ENCODE measurements at regions of chr7 and their contacts with region 1.

Region 1: GRCh38 chr7:101058355-101058754 is 26.9 kb upstream of the TRIM56 start:
- DNase-seq: peak; percentile 76
- ATAC-seq: peak; percentile 82

Region 2: GRCh38 chr7:100803398-100804233 is 254.7 kb before region 1 on chr7:
- intact Hi-C with region 1: loop called (anchors 10 kb)
- DNase-seq: peak; percentile 76
- ATAC-seq: peak; percentile 92

Region 3: GRCh38 chr7:100896732-100897608 is 161.4 kb before region 1 on chr7:
- intact Hi-C with region 1: loop called (anchors 1 kb)
- DNase-seq: peak; percentile 67
- ATAC-seq: peak; percentile 38

Region 4: DNA sequence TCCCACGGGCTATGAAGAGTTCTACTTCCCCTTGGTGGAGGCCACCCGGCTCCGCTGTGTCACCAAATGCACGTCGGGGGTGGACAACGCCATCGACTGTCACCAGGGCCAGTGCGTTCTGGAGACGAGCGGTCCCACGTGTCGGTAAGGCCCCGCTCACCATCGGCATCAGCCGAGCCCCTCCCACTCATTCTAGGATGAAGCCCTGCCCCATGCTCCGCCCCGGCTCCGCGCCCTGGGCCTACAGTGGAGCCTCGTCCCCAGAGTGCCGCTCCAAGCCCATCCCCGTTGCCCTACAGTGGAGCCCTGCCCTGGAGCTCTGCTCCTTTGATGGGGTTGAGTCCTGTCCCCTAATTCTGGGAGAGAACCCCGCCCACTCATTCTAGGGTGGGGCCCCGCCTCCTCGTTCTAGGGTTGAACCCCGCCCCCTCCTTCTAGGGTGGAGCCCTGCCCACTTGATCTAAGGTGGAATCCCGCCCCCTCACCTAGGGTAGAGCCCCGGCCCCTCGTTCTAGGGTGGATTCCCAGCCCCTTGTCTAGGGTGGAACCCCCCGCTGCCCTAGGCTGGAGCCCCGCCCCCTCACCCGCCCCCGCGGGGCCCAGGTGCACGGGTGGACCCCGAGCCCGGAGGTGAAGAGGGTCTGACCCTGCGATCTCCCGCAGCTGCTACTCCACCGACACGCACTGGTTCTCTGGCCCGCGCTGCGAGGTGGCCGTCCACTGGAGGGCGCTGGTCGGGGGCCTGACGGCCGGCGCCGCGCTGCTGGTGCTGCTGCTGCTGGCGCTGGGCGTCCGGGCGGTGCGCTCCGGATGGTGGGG is 92.4 kb before region 1 on chr7:
- intact Hi-C with region 1: loop called (anchors 5 kb)
- DNase-seq: peak; percentile 77
- ATAC-seq: peak; percentile 75

Region 5: GRCh38 chr7:101015626-101016025 is 42.7 kb before region 1 on chr7:
- intact Hi-C with region 1: no loop called
- DNase-seq: peak; percentile 22
- ATAC-seq: no peak

Region 6: GRCh38 chr7:101772513-101773211 is 714.3 kb after region 1 on chr7:
- intact Hi-C with region 1: no loop called
- DNase-seq: no peak
- ATAC-seq: no peak

Measured in Right ventricle myocardium superior (tissue), 1 donor.